Activated CD4-positive, alpha-beta memory T cell treated with anti-CD3 and anti-CD28 coated beads, Interleukin-2, amount 10 ng/mL, durations not matched to agents 7 days and 5 days (primary cell): ENCODE measurements at regions of chr1 and their contacts with region 1.

Region 1: DNA sequence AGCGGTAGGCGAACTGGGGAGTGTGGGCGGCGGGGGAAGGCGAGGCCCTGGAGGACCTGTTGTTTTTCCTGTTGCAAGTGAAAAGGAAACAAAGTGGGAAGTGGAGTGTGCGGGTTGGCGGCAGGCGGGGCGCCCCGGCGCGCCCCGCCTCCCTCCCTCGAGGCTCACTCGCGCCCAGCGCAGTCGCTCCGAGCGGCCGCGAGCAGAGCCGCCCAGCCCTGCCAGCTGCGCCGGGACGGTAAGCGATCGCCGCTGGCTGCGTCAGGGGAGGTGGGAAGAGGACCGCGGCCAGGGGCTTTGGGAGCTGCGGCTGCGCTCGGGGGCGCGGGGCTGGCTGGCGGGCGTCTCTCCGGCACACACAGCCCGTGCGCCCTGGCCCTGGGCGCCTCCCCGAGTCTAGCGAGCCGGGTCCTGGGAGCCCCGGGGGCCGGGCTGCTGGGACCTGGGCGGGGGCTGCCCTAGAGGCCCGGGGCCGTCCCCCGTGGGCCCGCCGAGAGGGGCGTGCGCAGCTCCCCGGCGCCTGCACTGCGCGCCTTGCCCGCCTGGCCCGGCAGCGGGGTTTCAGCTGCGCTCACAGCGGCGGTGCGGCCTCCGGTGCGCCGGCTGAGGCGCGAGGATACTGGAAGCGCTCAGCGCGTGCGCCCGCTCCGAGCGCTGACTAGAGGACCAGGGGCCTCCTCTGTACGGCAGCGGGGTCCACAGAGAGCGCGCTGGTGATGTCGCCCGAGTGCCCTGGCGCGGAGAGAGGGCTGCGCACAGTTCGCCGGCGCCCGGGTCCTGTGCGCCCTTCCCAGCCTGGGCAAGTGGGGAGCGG is at the start of gene PIK3CD:
- DNase-seq: peak; percentile 59
- H3K4me3 Mint-ChIP-seq: peak within 1 kb of the TSS; percentile 96
- H3K27ac Mint-ChIP-seq: peak within 1 kb of the TSS; percentile 98
- H3K4me1 Mint-ChIP-seq: peaks cover 51% of the 10 kb centered on the region
- H3K27me3 Mint-ChIP-seq: no peaks in the 10 kb centered on the region
- total RNA-seq, gene PIK3CD: 211 to 214 TPM

Region 2: GRCh38 chr1:9384751-9385245 is 267.0 kb before region 1 on chr1:
- CTCF ChIA-PET with region 1: no interaction called
- POLR2A ChIA-PET with region 1: no interaction called
- DNase-seq: no peak
- H3K4me3 Mint-ChIP-seq: no peak overlapping the region
- H3K27ac Mint-ChIP-seq: no peak overlapping the region
- H3K4me1 Mint-ChIP-seq: peaks cover 26% of the 10 kb centered on the region
- H3K27me3 Mint-ChIP-seq: peaks cover 20% of the 10 kb centered on the region

Region 3: DNA sequence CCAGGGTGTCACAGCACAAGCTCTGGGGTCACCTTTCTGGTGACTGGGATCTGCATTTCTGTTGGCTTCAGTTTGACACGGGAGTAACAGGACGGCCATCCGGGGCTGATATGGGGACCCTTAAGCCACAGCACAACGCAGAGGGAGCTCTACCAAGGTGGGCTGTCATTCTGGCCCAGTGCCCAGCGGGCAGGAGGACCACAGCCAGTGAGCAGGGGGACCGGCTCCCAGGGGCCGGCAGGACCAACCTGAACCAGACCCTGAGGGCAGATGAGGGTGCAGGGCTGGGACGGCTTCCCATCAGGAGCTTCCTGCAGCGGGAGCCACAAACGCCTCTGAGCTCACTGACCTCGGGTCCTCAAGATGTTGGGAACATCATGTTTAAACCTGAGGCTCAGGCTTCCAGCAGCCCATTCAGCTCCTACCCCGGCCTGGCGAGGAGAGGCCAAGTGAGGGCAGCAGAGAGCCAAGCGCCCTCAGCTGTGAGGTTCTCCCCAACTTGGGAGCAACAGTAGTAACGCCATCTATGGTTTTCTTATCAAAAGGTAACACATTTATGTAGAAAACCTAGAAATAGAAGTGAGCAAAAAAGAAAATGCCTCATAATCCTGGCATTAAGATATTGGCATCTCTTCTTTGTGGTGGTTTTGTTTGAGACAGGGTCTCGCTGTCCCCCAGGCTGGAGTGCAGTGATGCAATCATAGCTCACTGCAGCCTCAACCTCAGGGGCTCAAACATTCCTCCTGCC is 36.3 kb before region 1 on chr1:
- CTCF ChIA-PET with region 1: interaction called, 11 read pairs
- POLR2A ChIA-PET with region 1: interaction called, 3 read pairs
- DNase-seq: peak; percentile 65
- H3K4me3 Mint-ChIP-seq: no peak overlapping the region
- H3K27ac Mint-ChIP-seq: no peak overlapping the region
- H3K4me1 Mint-ChIP-seq: no peaks in the 10 kb centered on the region
- H3K27me3 Mint-ChIP-seq: peaks cover 5% of the 10 kb centered on the region

Region 4: GRCh38 chr1:9665193-9665592 is 13.4 kb after region 1 on chr1:
- CTCF ChIA-PET with region 1: interaction called, 3 read pairs
- POLR2A ChIA-PET with region 1: interaction called, 11 read pairs
- DNase-seq: no peak
- H3K4me3 Mint-ChIP-seq: no peak overlapping the region
- H3K27ac Mint-ChIP-seq: no peak overlapping the region
- H3K4me1 Mint-ChIP-seq: peaks cover 40% of the 10 kb centered on the region
- H3K27me3 Mint-ChIP-seq: no peaks in the 10 kb centered on the region

Region 5: DNA sequence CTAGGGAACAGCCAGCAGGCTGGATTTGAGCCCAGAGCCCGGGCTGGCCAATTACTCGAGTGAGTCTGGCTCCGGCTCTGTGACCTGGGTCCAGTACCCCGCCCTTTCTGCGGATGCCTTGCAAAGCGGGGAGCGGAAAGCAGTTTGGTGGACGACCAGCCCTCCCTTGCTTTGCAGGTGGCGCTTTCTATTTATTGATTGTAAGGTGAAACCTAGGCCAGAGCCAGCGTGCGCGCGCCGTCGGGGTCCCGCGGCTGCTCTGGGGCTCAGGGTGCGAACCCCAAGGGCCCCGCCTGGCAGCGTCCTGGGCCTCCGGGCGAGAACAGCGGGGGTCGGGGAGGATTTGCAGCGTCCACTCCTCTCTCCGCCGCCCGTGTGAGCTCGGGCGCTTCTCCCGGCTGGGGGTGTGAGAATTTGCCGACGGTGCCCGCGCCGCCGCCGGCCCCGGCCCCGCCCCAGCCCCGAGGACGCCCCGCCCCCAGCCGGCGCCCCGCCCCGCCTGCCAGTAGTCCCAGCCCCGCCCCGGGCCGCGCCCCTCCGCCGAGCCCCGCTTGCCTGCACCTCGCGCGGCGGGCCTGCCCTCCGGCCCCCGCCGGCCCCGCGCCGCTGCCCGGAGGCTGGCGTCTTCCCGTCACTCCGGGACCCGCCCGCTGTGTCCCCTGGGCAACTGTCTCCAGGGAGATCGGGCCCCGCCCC is 37.4 kb after region 1 on chr1:
- CTCF ChIA-PET with region 1: interaction called, 3 read pairs
- POLR2A ChIA-PET with region 1: interaction called, 44 read pairs
- DNase-seq: peak; percentile 84
- H3K4me3 Mint-ChIP-seq: peak overlapping the region; percentile 62
- H3K27ac Mint-ChIP-seq: no peak overlapping the region
- H3K4me1 Mint-ChIP-seq: peaks cover 62% of the 10 kb centered on the region
- H3K27me3 Mint-ChIP-seq: no peaks in the 10 kb centered on the region

Region 6: DNA sequence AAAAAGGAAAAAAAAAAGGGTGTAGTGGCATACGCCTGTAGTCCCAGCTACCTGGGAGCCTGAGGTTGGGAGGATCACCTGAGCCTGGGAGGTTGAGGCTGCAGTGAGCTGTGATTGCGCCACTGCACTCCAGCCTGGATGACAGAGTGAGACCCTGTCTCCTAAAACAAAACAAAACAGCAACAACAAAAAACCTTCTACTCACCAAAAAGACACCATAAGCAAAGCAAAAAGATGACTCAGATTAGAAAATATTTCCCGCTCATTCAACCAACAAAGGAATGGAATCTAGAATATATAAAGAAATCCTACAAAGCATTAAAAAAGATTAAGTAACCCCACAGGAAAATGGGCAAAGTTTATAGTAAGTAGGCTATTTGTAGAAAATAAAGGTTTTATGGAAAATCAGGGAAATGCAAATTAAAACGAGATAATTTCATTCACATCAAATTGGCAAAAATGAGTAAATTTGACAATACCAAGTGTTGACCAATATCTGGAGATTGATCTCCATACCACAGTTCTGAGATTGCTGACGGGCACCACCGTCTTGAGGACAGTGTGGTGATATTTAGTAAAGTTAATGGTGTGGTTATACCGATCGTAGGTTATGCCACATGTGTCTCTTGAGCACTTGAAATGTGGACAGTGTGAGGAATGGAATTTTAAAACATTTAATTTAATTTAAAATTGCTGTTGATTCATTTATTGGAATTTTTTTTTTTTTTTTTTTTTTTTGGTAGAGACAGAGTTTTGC is 53.7 kb after region 1 on chr1:
- CTCF ChIA-PET with region 1: no interaction called
- POLR2A ChIA-PET with region 1: interaction called, 19 read pairs
- DNase-seq: no peak
- H3K4me3 Mint-ChIP-seq: peak overlapping the region; percentile 14
- H3K27ac Mint-ChIP-seq: peak overlapping the region; percentile 78
- H3K4me1 Mint-ChIP-seq: peaks cover 66% of the 10 kb centered on the region
- H3K27me3 Mint-ChIP-seq: no peaks in the 10 kb centered on the region

Region 7: GRCh38 chr1:9724706-9725476 is 73.1 kb after region 1 on chr1:
- CTCF ChIA-PET with region 1: interaction called, 8 read pairs
- POLR2A ChIA-PET with region 1: interaction called, 200 read pairs
- DNase-seq: peak; percentile 76
- H3K4me3 Mint-ChIP-seq: no peak overlapping the region
- H3K27ac Mint-ChIP-seq: peak overlapping the region; percentile 27
- H3K4me1 Mint-ChIP-seq: peaks cover 57% of the 10 kb centered on the region
- H3K27me3 Mint-ChIP-seq: no peaks in the 10 kb centered on the region

Region 8: GRCh38 chr1:9730096-9730901 is 78.5 kb after region 1 on chr1:
- CTCF ChIA-PET with region 1: no interaction called
- POLR2A ChIA-PET with region 1: interaction called, 10 read pairs
- DNase-seq: no peak
- H3K4me3 Mint-ChIP-seq: peak overlapping the region; percentile 39
- H3K27ac Mint-ChIP-seq: peak overlapping the region; percentile 68
- H3K4me1 Mint-ChIP-seq: peaks cover 58% of the 10 kb centered on the region
- H3K27me3 Mint-ChIP-seq: no peaks in the 10 kb centered on the region

Region 9: GRCh38 chr1:9753121-9753531 is 101.4 kb after region 1 on chr1:
- CTCF ChIA-PET with region 1: no interaction called
- POLR2A ChIA-PET with region 1: no interaction called
- DNase-seq: no peak
- H3K4me3 Mint-ChIP-seq: no peak overlapping the region
- H3K27ac Mint-ChIP-seq: no peak overlapping the region
- H3K4me1 Mint-ChIP-seq: no peaks in the 10 kb centered on the region
- H3K27me3 Mint-ChIP-seq: no peaks in the 10 kb centered on the region

Region 10: DNA sequence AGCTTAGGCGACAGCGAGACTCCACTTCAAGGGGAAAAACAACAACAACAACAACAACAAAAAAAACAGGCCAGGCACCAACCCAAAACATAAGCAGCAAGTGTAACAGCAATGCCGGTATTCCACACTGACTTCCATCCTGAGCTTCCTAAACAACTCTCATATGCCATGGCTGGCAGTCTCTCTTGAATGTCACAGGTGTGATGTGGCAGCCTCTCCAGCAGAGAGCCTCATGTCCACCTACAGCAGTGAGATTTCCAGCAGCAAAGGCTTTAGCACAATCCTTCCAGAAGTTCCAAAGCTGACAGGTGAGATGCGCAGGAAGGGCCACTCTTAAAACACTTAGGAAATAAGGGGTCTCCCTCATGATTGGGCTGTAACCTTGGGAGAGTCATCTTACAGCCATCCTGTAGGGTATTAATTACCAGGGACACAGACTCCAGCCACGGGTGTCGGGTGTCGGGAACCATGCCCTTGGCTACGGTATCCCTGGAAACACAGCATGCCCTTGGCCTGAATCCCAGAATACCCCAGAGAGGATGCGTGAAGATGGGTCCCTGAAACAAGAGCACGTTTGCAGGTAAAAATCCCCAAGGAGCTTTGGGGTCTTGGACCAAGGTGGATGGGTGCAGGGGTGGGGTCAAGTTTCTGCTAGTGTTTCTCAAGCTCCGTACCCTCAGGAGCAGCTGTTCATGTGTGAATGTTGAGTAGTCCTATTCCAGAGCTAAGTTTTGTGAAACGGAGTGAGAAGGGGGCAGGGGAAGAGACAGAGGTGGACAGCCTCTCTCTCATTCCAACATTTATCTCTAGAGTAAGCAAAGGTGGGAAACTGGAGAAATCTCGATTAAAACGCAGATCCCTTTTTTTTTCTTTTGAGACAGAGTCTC is 140.6 kb after region 1 on chr1:
- CTCF ChIA-PET with region 1: no interaction called
- POLR2A ChIA-PET with region 1: no interaction called
- DNase-seq: no peak
- H3K4me3 Mint-ChIP-seq: no peak overlapping the region
- H3K27ac Mint-ChIP-seq: no peak overlapping the region
- H3K4me1 Mint-ChIP-seq: peaks cover 26% of the 10 kb centered on the region
- H3K27me3 Mint-ChIP-seq: no peaks in the 10 kb centered on the region